Endothelial cell of umbilical vein (primary cell): ENCODE measurements at regions of chr11 and their contacts with region 1.

Region 1: DNA sequence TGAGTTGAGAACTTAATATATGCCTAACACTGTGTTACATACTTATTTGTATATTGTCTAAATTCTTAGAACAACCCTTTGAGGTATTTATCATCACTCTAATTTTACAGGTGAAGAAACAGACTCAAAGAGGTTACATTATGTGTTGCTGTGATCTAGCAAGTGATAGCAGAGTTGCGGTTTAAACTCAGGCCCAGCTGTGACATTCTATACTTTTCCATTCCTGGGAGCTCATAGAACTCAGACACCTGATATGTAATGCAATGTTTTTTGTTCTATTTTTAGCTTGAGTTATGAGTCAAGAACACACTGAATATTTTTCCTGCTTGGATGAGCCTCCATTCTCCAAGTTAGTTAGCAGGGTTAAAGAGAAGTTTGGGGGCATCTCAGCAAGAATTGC is 449.7 kb upstream of the DDI1 start:
- DNase-seq: peak; percentile 55
- H3K4me3 ChIP-seq: no peak overlapping the region
- H3K27ac ChIP-seq: peak overlapping the region; percentile 88
- H3K4me1 ChIP-seq: peaks cover 44% of the 10 kb centered on the region
- H3K27me3 ChIP-seq: no peaks in the 10 kb centered on the region
- CTCF ChIP-seq: no peak
- POLR2A ChIP-seq: no peak

Region 2: DNA sequence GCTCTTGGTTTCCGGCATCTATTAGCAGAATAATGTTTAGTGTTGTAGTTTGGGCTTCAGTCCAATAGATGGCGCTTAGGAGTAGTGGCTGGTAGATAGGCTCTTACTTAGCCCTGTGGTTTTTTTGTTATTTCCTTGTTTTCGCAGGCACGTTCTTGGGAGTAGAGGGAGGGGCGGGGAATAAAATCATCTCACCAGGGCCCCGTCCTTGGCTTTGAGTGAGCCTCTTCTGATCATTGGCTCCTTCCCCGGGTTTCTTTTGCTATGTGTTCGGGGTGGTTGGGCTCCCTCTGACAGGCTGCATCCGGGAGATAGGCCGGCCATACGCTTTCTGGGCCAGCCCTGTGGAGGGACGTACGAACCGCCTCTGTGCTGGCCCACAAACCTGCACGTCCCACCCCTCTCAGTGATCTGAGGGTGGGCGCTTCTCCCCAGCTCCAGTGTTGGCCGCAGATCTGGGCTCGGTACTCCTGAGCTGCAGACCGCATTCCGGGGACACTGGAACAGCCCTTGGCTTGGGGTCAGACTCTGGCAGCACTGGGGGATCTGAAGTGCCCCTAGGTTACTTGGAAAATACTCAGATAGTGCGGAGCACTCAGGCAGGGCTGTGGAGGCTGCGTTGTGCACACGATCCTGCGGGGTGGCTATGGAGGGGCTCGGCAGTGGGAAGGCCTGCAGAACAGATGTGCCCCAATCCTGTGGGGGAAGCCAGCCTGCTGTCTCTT is 260.5 kb before region 1 on chr11:
- CTCF ChIA-PET with region 1: interaction called, 3 read pairs
- POLR2A ChIA-PET with region 1: no interaction called
- dilution Hi-C with region 1: no loop called
- intact Hi-C with region 1: loop called (anchors 1 kb)
- DNase-seq: peak; percentile 77
- H3K4me3 ChIP-seq: no peak overlapping the region
- H3K27ac ChIP-seq: no peak overlapping the region
- H3K4me1 ChIP-seq: peaks cover 8% of the 10 kb centered on the region
- H3K27me3 ChIP-seq: no peaks in the 10 kb centered on the region
- CTCF ChIP-seq: peak; percentile 67 to 74
- POLR2A ChIP-seq: no peak

Region 3: GRCh38 chr11:103433386-103434380 is 153.1 kb before region 1 on chr11:
- CTCF ChIA-PET with region 1: no interaction called
- POLR2A ChIA-PET with region 1: no interaction called
- dilution Hi-C with region 1: no loop called
- intact Hi-C with region 1: loop called (anchors 5 kb)
- DNase-seq: peak; percentile 84
- H3K4me3 ChIP-seq: no peak overlapping the region
- H3K27ac ChIP-seq: no peak overlapping the region
- H3K4me1 ChIP-seq: peaks cover 15% of the 10 kb centered on the region
- H3K27me3 ChIP-seq: no peaks in the 10 kb centered on the region
- CTCF ChIP-seq: no peak
- POLR2A ChIP-seq: no peak

Region 4: GRCh38 chr11:103529181-103529684 is 57.5 kb before region 1 on chr11:
- CTCF ChIA-PET with region 1: interaction called, 4 read pairs
- POLR2A ChIA-PET with region 1: no interaction called
- dilution Hi-C with region 1: no loop called
- intact Hi-C with region 1: loop called (anchors 1 kb)
- DNase-seq: peak; percentile 75
- H3K4me3 ChIP-seq: no peak overlapping the region
- H3K27ac ChIP-seq: peak overlapping the region; percentile 95
- H3K4me1 ChIP-seq: peaks cover 72% of the 10 kb centered on the region
- H3K27me3 ChIP-seq: no peaks in the 10 kb centered on the region
- CTCF ChIP-seq: no peak
- POLR2A ChIP-seq: peak; percentile 42

Region 5: GRCh38 chr11:103566116-103566515 is 20.6 kb before region 1 on chr11:
- CTCF ChIA-PET with region 1: no interaction called
- POLR2A ChIA-PET with region 1: no interaction called
- dilution Hi-C with region 1: no loop called
- intact Hi-C with region 1: loop called (anchors 2 kb)
- DNase-seq: no peak
- H3K4me3 ChIP-seq: no peak overlapping the region
- H3K27ac ChIP-seq: no peak overlapping the region
- H3K4me1 ChIP-seq: no peaks in the 10 kb centered on the region
- H3K27me3 ChIP-seq: no peaks in the 10 kb centered on the region
- CTCF ChIP-seq: no peak
- POLR2A ChIP-seq: no peak

Region 6: DNA sequence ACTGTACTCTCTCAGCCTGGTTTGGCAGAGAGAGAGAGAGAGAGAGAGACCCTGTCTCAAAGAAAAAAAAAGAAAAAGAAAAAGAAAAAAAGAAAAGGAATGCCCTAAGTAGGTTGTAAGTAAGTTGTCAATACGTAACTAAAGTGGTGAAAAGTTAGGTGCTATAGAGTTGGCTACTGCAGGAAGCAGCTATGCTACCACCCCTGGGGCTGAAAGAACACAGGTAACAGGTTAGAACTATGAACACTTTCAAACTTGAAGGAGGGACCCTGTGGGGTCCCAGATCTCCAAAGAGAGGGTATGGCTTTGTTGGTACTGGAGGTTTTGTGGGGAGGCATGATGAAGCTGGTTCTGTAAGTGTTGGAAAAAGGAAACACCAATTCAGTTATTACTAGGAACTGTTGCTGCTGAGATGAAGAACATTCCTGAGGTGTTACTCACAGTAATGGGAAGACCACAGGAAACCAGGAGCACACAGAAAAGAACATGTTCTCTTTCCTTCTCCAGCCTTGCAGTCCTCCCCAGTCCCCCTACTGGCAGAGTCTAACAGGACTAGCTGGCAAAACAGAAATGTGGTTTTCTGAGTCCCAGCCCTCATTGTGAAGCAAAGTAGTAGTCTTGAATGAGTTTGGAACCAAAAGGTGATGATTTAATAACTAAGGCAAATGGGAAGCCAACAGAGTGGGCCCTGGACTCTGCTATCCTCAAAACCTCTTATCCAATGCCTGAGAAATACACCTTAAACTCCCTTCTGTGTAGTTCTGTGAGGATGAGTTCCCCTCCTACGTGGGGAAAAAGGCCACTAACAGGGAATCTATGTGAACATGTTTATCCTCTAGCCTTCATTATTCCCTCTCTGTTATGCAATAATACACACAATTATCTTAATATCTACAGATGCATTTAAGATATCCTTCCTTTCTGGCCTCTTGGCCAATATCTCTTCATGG is 22.6 kb after region 1 on chr11:
- CTCF ChIA-PET with region 1: interaction called, 6 read pairs
- POLR2A ChIA-PET with region 1: no interaction called
- dilution Hi-C with region 1: no loop called
- intact Hi-C with region 1: loop called (anchors 1 kb)
- DNase-seq: peak; percentile 89
- H3K4me3 ChIP-seq: no peak overlapping the region
- H3K27ac ChIP-seq: peak overlapping the region; percentile 99
- H3K4me1 ChIP-seq: peaks cover 25% of the 10 kb centered on the region
- H3K27me3 ChIP-seq: no peaks in the 10 kb centered on the region
- CTCF ChIP-seq: peak; percentile 81 to 83
- POLR2A ChIP-seq: peak; percentile 43

Region 7: GRCh38 chr11:103903621-103904323 is 317.0 kb after region 1 on chr11:
- CTCF ChIA-PET with region 1: no interaction called
- POLR2A ChIA-PET with region 1: no interaction called
- dilution Hi-C with region 1: no loop called
- intact Hi-C with region 1: loop called (anchors 1 kb)
- DNase-seq: no peak
- H3K4me3 ChIP-seq: no peak overlapping the region
- H3K27ac ChIP-seq: no peak overlapping the region
- H3K4me1 ChIP-seq: peaks cover 36% of the 10 kb centered on the region
- H3K27me3 ChIP-seq: no peaks in the 10 kb centered on the region
- CTCF ChIP-seq: no peak
- POLR2A ChIP-seq: no peak